ENCODE measurements at regions of chr22 and their contacts with region 1.

Region 1: DNA sequence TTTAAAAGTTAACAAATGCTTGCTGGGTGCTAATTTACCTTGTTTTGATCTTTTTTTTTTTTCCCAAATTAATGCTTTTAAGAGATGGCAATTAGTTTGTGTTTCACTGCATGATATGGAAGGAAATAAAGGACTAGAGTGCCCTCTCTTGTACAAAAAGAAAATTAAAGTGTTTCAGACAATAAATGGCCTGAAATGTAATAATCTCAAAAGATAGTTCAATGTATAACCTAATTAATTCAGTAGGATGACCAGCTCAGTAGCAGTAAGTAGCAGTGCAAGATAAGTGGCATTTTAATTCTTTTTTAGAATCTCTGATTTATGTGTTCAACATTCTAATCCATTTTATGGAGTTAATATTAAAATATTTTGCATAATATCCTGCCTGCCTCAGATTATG is 39.9 kb upstream of the MYO18B start:
- DNase-seq: no peak
- H3K4me3 Mint-ChIP-seq: peak overlapping the region; percentile 64
- H3K27ac Mint-ChIP-seq: peak overlapping the region; percentile 79
- H3K4me1 Mint-ChIP-seq: peaks cover 57% of the 10 kb centered on the region
- H3K27me3 Mint-ChIP-seq: no peaks in the 10 kb centered on the region

Region 2: GRCh38 chr22:25488244-25489020 is 213.6 kb before region 1 on chr22:
- intact Hi-C with region 1: loop called (anchors 1 kb)
- DNase-seq: no peak
- H3K4me3 Mint-ChIP-seq: peak overlapping the region; percentile 59
- H3K27ac Mint-ChIP-seq: peak overlapping the region; percentile 94
- H3K4me1 Mint-ChIP-seq: peaks cover 54% of the 10 kb centered on the region
- H3K27me3 Mint-ChIP-seq: no peaks in the 10 kb centered on the region

Region 3: GRCh38 chr22:25669253-25670069 is 32.6 kb before region 1 on chr22:
- intact Hi-C with region 1: loop called (anchors 1 kb)
- DNase-seq: no peak
- H3K4me3 Mint-ChIP-seq: no peak overlapping the region
- H3K27ac Mint-ChIP-seq: peak overlapping the region; percentile 33
- H3K4me1 Mint-ChIP-seq: peaks cover 26% of the 10 kb centered on the region
- H3K27me3 Mint-ChIP-seq: no peaks in the 10 kb centered on the region

Region 4: GRCh38 chr22:25736378-25737011 is 34.5 kb after region 1 on chr22:
- intact Hi-C with region 1: loop called (anchors 2 kb)
- DNase-seq: peak; percentile 74
- H3K4me3 Mint-ChIP-seq: peak overlapping the region; percentile 54
- H3K27ac Mint-ChIP-seq: peak overlapping the region; percentile 99
- H3K4me1 Mint-ChIP-seq: peaks cover 56% of the 10 kb centered on the region
- H3K27me3 Mint-ChIP-seq: no peaks in the 10 kb centered on the region

Region 5: GRCh38 chr22:25772288-25772687 is 70.2 kb after region 1 on chr22:
- intact Hi-C with region 1: loop called (anchors 2 kb)
- DNase-seq: no peak
- H3K4me3 Mint-ChIP-seq: no peak overlapping the region
- H3K27ac Mint-ChIP-seq: peak overlapping the region; percentile 84
- H3K4me1 Mint-ChIP-seq: peaks cover 30% of the 10 kb centered on the region
- H3K27me3 Mint-ChIP-seq: no peaks in the 10 kb centered on the region